Naive thymus-derived CD4-positive, alpha-beta T cell (primary cell): ENCODE measurements at regions of chrX and their contacts with region 1.

Region 1: GRCh38 chrX:150587585-150588503 is 19.4 kb downstream of the MTM1 start:
- DNase-seq: peak in 6 of 9 donors; percentile 16 to 53 (median 38)
- ATAC-seq: peak; percentile 55
- H3K4me3 ChIP-seq: no peak overlapping the region
- H3K4me3 Mint-ChIP-seq: no peak overlapping the region
- H3K27ac ChIP-seq: no peak overlapping the region
- H3K27ac Mint-ChIP-seq: no peak overlapping the region
- H3K4me1 ChIP-seq: no peaks in the 10 kb centered on the region
- H3K4me1 Mint-ChIP-seq: peaks cover 0 to 33% (median 25%) of the 10 kb centered on the region in 7 donors
- H3K27me3 ChIP-seq: no peaks in the 10 kb centered on the region
- H3K27me3 Mint-ChIP-seq: no peaks in the 10 kb centered on the region

Region 2: GRCh38 chrX:150449313-150449712 is 138.5 kb before region 1 on chrX:
- CTCF ChIA-PET with region 1: no interaction called
- POLR2A ChIA-PET with region 1: no interaction called
- intact Hi-C with region 1: loop called in 1 of 2 experiments (anchors 5 kb)
- DNase-seq: no peak
- ATAC-seq: no peak
- H3K4me3 ChIP-seq: no peak overlapping the region
- H3K4me3 Mint-ChIP-seq: no peak overlapping the region
- H3K27ac ChIP-seq: no peak overlapping the region
- H3K27ac Mint-ChIP-seq: no peak overlapping the region
- H3K4me1 ChIP-seq: no peaks in the 10 kb centered on the region
- H3K4me1 Mint-ChIP-seq: peaks cover 4 to 45% (median 8%) of the 10 kb centered on the region in 7 donors
- H3K27me3 ChIP-seq: no peaks in the 10 kb centered on the region
- H3K27me3 Mint-ChIP-seq: no peaks in the 10 kb centered on the region

Region 3: DNA sequence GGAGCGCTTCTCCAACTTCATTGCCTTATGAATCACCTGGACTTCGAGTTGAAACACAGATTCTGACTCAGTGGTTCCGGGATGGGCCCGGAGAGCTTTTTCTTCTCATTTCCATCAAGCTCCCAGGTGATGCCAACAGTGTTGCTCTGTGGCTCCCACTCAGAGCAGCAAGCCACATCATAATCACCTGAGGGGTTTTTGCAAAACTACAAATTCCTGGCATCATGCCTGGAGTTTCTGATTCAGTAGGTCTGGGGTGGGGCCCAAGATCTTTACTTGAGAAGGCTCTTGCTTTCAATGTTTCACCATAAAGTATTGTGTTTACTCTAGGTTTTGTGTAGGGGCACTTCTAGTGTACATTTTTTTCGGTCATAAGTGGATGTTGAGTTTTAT is 12.4 kb before region 1 on chrX:
- CTCF ChIA-PET with region 1: interaction called, 7 read pairs
- POLR2A ChIA-PET with region 1: interaction called, 4 read pairs
- intact Hi-C with region 1: loop called (anchors 1 to 2 kb)
- DNase-seq: peak in 4 of 9 donors; percentile 15 to 75 (median 36)
- ATAC-seq: peak; percentile 78
- H3K4me3 ChIP-seq: peak overlapping the region; percentile 42
- H3K4me3 Mint-ChIP-seq: peak overlapping the region; percentile 64 to 86 (median 78)
- H3K27ac ChIP-seq: peak overlapping the region; percentile 59
- H3K27ac Mint-ChIP-seq: peak overlapping the region; percentile 45 to 94 (median 83)
- H3K4me1 ChIP-seq: peaks cover 62 to 68% of the 10 kb centered on the region in 2 donors
- H3K4me1 Mint-ChIP-seq: peaks cover 23 to 88% (median 79%) of the 10 kb centered on the region in 7 donors
- H3K27me3 ChIP-seq: no peaks in the 10 kb centered on the region
- H3K27me3 Mint-ChIP-seq: no peaks in the 10 kb centered on the region

Region 4: DNA sequence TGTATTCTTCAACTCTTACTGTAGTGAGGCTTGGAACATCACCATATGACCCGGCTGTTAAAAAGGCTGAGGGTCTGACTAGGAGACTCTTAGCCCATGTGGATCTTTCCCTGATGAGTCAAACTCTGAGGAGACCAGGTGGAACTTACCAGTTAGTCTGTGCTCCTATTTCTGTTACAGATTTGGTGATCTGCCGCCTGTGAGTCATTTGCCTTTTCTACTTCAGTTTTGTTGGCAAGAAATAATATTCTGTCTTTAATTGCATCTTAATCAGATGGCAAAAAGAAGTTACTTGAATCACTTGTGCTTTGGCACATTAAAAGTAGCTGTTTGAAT is 29.0 kb after region 1 on chrX:
- CTCF ChIA-PET with region 1: no interaction called
- POLR2A ChIA-PET with region 1: no interaction called
- intact Hi-C with region 1: no loop called
- DNase-seq: no peak
- ATAC-seq: no peak
- H3K4me3 ChIP-seq: no peak overlapping the region
- H3K4me3 Mint-ChIP-seq: no peak overlapping the region
- H3K27ac ChIP-seq: no peak overlapping the region
- H3K27ac Mint-ChIP-seq: no peak overlapping the region
- H3K4me1 ChIP-seq: no peaks in the 10 kb centered on the region
- H3K4me1 Mint-ChIP-seq: peaks cover 0 to 8% (median 4%) of the 10 kb centered on the region in 7 donors
- H3K27me3 ChIP-seq: no peaks in the 10 kb centered on the region
- H3K27me3 Mint-ChIP-seq: no peaks in the 10 kb centered on the region